Activated CD4-positive, alpha-beta memory T cell treated with anti-CD3 and anti-CD28 coated beads for 36 hours (primary cell): ENCODE measurements at regions of chr18 and their contacts with region 1.

Region 1: DNA sequence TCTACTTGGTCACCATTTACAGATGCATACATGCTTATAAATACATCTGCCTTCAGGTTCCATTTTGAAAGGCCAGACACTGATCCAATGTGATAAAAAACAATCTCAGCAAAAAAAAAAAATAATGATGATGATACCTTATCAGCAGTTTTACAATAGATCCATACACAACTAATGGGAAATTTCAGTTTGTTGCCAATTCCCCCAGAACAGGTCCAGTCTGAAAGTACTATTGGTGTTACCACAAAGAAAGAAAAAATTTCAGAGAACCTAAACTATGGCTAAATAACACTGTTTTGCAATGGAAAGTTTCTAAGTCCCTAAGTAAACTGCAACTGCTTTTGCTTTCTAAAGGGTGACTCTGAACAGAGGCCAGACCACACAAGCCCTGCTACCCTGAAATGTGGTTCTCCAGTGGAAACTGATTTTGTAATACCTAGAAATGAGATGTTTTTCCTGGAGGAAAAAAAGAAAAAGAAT is 54.1 kb downstream of the LPIN2 start:
- DNase-seq: peak; percentile 64
- H3K4me3 Mint-ChIP-seq: peak overlapping the region; percentile 62
- H3K27ac Mint-ChIP-seq: peak overlapping the region; percentile 100
- H3K4me1 Mint-ChIP-seq: peaks cover 92% of the 10 kb centered on the region
- H3K27me3 Mint-ChIP-seq: no peaks in the 10 kb centered on the region

Region 2: DNA sequence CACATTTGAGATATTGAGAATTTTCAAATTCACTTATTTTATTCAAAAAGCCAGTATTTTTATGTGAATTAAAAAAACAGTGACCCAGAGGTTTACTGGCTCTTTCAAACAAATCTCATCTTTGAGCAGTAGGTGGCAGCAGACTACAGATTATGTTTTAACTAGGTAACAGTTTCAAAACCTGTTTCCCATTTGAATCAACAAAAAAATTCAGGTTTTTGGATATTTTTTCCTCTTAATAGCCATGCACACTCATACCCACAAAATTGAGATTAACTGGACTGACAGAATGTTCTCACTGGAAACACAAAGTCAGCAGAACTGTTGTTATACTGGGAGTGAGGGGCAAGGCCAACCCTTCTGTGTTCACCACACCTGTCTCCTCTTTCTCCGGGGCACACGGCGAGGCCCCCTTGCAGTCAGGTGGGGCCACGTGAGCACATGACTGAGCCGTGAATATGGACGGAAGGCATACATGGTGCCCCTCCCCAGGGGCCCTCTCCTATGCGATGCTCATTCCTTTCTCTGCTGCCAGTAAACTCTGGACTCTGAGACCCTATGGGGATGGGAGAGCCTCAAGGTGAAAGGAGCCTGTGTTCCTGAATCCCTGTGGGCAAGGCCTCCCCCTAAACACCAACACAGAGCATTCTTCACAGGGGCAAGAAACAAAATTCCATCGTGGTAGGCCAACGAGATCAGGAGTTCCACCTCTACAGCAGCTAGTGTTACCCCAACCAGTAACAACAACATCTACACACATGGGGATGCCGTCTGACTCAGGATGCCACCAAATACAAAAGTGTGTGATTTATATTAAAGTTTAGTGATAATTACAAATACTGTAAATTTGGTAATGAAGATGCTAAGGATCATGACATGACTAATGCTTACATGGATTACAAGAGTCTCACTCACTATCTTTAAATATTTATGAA is 26.3 kb before region 1 on chr18:
- CTCF ChIA-PET with region 1: interaction called, 11 read pairs
- POLR2A ChIA-PET with region 1: no interaction called
- intact Hi-C with region 1: loop called (anchors 1 kb)
- DNase-seq: no peak
- H3K4me3 Mint-ChIP-seq: peak overlapping the region; percentile 18
- H3K27ac Mint-ChIP-seq: peak overlapping the region; percentile 89
- H3K4me1 Mint-ChIP-seq: peaks cover 45% of the 10 kb centered on the region
- H3K27me3 Mint-ChIP-seq: no peaks in the 10 kb centered on the region

Region 3: DNA sequence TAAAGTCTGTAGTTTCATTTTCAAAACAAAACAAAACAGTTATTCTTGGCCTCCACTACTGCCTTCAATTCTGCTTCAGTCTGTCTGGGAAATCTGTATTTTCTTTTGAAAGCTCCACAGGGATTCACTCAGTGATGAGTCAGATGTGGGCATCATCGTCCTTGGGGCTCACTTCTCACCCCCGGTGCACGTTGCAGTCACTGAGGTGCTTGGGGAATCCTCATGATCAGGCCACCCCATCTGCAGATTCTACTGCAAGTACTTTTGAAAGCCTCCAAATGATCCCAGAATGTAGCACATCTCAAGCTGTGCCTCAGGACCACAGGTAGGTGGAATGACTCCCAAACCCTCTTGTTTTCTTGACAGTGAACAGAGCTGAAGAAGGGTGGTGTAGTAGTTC is 19.8 kb after region 1 on chr18:
- CTCF ChIA-PET with region 1: interaction called, 16 read pairs
- POLR2A ChIA-PET with region 1: interaction called, 139 read pairs
- intact Hi-C with region 1: loop called (anchors 1 kb)
- DNase-seq: peak; percentile 72
- H3K4me3 Mint-ChIP-seq: peak overlapping the region; percentile 73
- H3K27ac Mint-ChIP-seq: peak overlapping the region; percentile 93
- H3K4me1 Mint-ChIP-seq: peaks cover 85% of the 10 kb centered on the region
- H3K27me3 Mint-ChIP-seq: no peaks in the 10 kb centered on the region

Region 4: GRCh38 chr18:3012964-3013804 is 54.3 kb after region 1 on chr18 and contains the start of gene LPIN2:
- CTCF ChIA-PET with region 1: no interaction called
- POLR2A ChIA-PET with region 1: interaction called, 3 read pairs
- intact Hi-C with region 1: loop called (anchors 2 kb)
- DNase-seq: peak; percentile 98
- H3K4me3 Mint-ChIP-seq: peak within 1 kb of the TSS; percentile 98
- H3K27ac Mint-ChIP-seq: peak within 1 kb of the TSS; percentile 96
- H3K4me1 Mint-ChIP-seq: peaks cover 63% of the 10 kb centered on the region
- H3K27me3 Mint-ChIP-seq: no peaks in the 10 kb centered on the region
- total RNA-seq, gene LPIN2: 102 to 107 TPM